ENCODE measurements at regions of chr3 and their contacts with region 1.

Region 1: GRCh38 chr3:133644768-133645167 is 17.0 kb downstream of the TOPBP1 start:
- DNase-seq: no peak

Region 2: DNA sequence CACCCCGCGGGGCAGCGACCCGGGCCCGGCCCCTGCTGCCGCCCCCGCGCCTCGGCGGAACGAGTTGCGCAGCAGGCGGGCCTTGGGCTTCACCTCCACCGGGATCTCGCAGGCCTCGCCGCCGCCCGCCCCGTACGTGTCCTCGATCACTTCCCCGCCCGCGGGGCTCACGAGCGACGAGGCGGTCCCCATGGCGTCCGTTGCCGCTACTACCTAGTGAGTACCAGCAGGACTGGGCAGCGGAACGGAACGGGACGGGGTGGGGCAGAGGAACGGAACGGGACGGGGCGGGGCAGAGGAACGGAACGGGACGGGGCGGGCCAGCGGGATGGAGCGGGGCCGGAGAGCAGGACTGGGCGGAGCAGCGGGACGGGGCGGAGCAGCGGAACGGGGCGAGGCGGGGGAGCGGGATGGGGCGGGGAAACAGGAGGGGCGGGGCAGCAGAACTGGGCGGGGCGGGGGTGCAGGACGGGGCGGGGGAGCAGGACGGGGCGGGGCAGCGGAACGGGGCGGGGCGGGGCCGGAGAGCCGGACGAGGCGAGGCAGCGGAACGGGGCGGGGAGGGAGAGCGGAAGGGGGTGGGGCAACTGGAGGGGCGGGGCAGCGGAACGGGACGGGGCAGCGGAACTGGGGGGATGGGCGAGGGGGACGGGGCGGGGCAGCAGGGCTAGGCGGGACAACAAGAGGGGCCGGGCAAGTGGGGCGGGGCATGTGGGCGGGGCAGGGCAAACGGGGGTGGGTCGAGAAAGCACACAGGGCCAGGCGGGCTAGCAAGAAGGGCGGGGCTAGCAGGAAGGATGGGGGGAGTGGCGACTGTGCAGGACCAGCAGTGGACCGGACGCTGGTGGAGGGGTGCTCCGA is 922.4 kb before region 1 on chr3 and contains the start of gene NPHP3:
- in situ Hi-C with region 1: loop called (anchors 25 kb)
- DNase-seq: peak; percentile 84

Region 3: GRCh38 chr3:134111616-134112015 is 466.8 kb after region 1 on chr3:
- in situ Hi-C with region 1: no loop called
- DNase-seq: no peak